Naive thymus-derived CD4-positive, alpha-beta T cell (primary cell): ENCODE measurements at regions of chr12 and their contacts with region 1.

Region 1: DNA sequence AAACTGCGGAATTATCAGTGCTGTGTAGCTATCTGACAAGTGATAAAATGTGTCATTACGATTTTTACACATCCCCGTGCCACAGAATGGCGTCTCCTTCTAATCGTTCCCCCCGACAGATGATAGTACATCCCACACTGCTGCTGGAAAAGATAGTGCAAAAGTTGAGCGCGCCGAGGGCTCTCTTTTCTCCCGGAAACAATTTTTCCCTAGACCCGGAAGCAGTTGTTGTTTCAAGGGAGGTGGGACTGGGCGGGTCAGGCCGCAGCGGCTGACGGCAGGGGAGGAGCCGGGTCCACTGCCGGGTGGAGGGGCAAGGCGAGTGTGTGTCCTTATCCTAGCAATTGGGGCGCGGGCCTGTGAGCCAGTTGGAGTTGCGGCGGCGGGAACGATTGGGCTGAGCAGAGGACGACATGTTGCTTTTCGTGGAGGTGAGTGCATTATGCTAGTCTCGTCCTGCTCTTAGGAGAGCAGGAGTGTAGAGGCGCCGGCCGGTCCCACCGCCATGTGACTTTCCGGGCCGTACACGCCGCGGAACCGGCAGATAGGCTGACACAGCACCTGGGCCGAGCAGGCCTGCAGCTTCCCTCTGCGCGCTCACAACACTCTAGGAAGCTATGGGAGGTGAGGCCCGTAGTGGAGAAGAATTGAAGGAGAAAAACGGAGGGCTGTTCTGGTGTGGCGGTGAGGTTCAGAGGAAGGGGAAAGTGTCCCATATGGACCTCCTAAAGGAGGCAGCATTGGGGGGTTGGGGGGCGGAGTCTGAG is at the start of gene LARP4:
- DNase-seq: peak; percentile 70 to 92 (median 88)
- ATAC-seq: peak; percentile 98
- H3K4me3 ChIP-seq: peak within 1 kb of the TSS; percentile 66
- H3K4me3 Mint-ChIP-seq: peak within 1 kb of the TSS; percentile 81 to 100 (median 99)
- H3K27ac ChIP-seq: peak within 1 kb of the TSS; percentile 77
- H3K27ac Mint-ChIP-seq: peak within 1 kb of the TSS; percentile 86 to 97 (median 95)
- H3K4me1 ChIP-seq: peaks cover 9 to 12% of the 10 kb centered on the region in 2 donors
- H3K4me1 Mint-ChIP-seq: peaks cover 23 to 55% (median 37%) of the 10 kb centered on the region in 7 donors
- H3K27me3 ChIP-seq: no peaks in the 10 kb centered on the region
- H3K27me3 Mint-ChIP-seq: peaks cover 0 to 13% (median 6%) of the 10 kb centered on the region in 5 donors
- total RNA-seq, gene LARP4: 22.1 to 68.9 (median 38.4) TPM

Region 2: DNA sequence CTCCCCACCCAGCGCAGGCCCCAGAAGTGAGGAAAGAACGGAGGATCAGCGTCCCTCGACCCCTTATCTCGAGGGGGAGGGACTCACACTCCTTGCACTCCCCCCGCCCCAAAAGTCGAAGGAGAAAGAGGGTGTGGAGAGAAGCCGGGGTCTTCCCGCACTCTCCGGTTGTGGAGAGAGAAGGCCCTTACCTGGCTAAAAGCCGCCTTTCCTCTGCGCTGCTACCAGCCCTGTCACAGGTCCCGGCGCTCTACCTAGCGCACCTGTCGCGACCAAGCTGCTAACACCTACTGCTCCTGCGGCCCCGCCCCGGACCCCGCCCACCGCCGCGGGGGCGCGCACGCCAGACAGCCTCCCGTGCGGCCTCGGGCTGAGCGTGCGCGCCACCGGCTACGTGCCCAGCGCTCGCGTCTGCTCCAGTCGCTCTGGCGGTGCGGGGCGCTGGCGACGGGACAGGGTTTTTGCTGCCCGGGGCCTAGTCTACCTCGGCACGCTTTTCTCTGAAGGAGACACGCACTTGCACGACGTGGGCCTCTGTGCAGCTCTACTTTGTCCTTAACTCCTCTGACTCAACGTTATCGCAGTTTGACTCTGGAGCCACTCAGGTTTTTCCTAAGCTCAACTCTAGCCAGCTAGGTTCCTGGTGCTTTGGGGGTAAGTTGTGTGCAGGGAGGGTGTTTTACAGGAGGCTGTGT is 117.4 kb before region 1 on chr12 and contains the start of gene LIMA1:
- CTCF ChIA-PET with region 1: no interaction called
- POLR2A ChIA-PET with region 1: interaction called, 4 read pairs
- intact Hi-C with region 1: loop called (anchors 1 to 2 kb)
- DNase-seq: peak; percentile 91 to 97 (median 94)
- ATAC-seq: peak; percentile 100
- H3K4me3 ChIP-seq: peak within 1 kb of the TSS; percentile 80
- H3K4me3 Mint-ChIP-seq: peak within 1 kb of the TSS; percentile 87 to 98 (median 94)
- H3K27ac ChIP-seq: peak within 1 kb of the TSS; percentile 90
- H3K27ac Mint-ChIP-seq: peak within 1 kb of the TSS; percentile 80 to 95 (median 88)
- H3K4me1 ChIP-seq: peaks cover 11 to 15% of the 10 kb centered on the region in 2 donors
- H3K4me1 Mint-ChIP-seq: peaks cover 8 to 32% (median 23%) of the 10 kb centered on the region in 7 donors
- H3K27me3 ChIP-seq: no peaks in the 10 kb centered on the region
- H3K27me3 Mint-ChIP-seq: peaks cover 0 to 27% (median 0%) of the 10 kb centered on the region in 5 donors
- total RNA-seq, gene LIMA1: 9.8 to 33.6 (median 11.2) TPM

Region 3: DNA sequence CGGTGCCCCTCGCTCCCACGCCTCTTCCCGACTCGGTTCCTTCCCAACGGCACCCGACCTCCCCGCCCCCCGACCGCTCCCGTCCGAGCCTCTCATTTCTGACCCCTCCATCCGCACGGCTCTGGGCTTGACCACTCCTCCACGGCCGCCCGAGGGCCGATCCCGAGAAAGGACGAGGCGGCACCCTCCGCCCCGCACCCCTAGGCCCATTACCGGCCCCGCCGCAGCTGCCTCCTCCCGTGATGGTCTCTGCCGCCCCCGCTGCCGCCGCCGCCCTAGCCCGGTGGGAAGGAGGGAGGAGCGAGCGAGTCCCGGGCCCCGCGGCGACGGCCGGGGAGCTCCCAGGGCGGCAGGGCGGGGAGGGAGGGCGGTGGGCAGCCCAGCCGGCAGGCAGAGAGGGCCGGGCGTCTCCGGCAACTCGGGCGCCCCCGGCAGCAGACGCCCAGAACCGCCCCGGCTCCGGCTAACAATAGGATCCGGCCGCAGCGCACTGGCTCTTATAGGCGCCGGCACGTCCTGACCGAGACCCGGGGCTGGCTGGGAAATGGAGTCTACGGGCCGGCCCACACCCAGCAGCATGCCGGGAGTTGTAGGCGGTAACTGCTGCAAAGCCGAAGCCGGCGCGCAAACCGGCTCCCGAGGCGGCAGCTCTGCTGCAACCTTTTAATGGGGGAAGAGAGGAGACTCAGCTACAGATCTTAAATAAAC is 682.5 kb after region 1 on chr12 and contains the start of gene CSRNP2:
- CTCF ChIA-PET with region 1: no interaction called
- POLR2A ChIA-PET with region 1: no interaction called
- intact Hi-C with region 1: loop called in 1 of 2 experiments (anchors 5 kb)
- DNase-seq: peak; percentile 90 to 95 (median 94)
- ATAC-seq: peak; percentile 100
- H3K4me3 ChIP-seq: peak within 1 kb of the TSS; percentile 78
- H3K4me3 Mint-ChIP-seq: peak within 1 kb of the TSS; percentile 89 to 100 (median 96)
- H3K27ac ChIP-seq: peak within 1 kb of the TSS; percentile 97
- H3K27ac Mint-ChIP-seq: peak within 1 kb of the TSS; percentile 89 to 98 (median 93)
- H3K4me1 ChIP-seq: peaks cover 7% of the 10 kb centered on the region in 2 donors
- H3K4me1 Mint-ChIP-seq: peaks cover 22 to 46% (median 43%) of the 10 kb centered on the region in 7 donors
- H3K27me3 ChIP-seq: no peaks in the 10 kb centered on the region
- H3K27me3 Mint-ChIP-seq: no peaks in the 10 kb centered on the region
- total RNA-seq, gene CSRNP2: 20.0 to 38.7 (median 23.4) TPM